ENCODE measurements at regions of chr10 and their contacts with region 1.

Region 1: DNA sequence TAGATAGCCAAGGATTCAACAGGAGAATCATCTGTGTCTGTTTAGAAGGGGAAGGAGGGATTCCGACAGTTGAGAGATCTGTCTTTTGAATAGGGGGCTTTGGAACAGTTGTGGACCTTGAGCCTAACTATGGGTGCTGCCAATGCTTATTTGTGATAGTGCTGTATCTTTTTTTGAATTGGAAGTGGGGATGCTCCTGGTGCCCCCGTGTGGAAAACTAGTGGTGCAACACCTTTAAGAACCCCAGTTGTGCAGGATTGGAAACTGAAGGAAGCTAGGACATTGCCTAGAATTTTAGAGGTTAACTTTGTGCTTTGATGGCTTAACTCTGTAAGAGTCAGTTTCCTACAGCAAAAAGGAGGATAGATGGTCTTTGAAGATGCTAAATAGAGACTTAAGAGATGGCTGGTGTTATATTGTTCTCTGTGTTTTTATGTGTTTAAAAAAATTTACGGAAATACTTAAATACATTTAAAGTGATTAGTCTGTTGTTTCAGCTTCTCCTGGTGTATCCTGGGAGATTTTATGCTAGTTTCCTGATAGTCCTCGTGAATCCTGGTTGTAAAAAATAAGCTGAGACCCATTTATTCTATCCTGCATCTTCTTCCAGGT is 69.3 kb downstream of the AP3M1 start:
- DNase-seq: peak; percentile 37
- CTCF ChIP-seq: peak; percentile 64

Region 2: DNA sequence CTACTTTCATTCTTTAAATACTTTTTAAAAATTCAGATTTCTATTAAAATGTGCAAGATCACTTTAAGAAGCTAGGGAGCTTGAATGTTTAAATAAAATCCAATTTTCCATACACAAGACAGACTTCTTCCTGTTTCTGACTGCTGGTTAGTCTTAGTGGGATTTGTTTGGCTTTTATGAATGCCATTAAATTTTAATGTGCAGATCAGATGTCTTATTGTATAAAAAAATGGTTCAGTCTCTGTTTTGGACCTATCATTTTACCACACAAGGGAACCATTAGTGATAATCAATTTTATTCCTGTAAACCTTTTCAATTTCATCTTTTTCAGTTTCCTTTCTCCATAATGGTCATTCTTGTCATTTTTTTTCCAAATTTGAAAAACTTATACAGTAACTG is 20.2 kb before region 1 on chr10:
- CTCF ChIA-PET with region 1: interaction called, 12 read pairs
- POLR2A ChIA-PET with region 1: no interaction called
- DNase-seq: no peak
- CTCF ChIP-seq: no peak

Region 3: GRCh38 chr10:74096777-74097176 is 15.5 kb after region 1 on chr10:
- CTCF ChIA-PET with region 1: interaction called, 61 read pairs
- POLR2A ChIA-PET with region 1: no interaction called
- DNase-seq: peak; percentile 75
- CTCF ChIP-seq: no peak

Region 4: GRCh38 chr10:74103560-74104248 is 22.4 kb after region 1 on chr10:
- CTCF ChIA-PET with region 1: interaction called, 23 read pairs
- POLR2A ChIA-PET with region 1: no interaction called
- DNase-seq: peak; percentile 63
- CTCF ChIP-seq: peak; percentile 59

Region 5: DNA sequence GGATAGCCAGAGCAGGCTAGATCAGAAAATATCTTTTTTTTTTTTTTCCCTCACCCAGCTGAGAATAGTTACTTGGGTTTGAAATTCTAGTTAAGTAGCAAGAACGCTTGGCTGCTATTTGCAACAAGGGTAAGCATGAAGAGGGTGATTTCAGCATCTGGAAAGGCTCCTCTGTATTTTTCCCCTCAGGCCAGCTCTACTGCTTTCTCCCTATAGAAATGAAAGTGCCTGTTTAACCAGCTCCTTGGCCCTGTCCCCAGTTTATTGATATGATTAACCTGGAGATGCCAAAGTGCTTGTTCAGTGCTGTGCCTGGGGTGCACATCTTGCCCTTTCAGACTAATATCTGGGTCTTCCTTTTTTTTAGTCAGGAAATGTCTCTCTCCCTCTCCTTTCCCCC is 32.2 kb after region 1 on chr10:
- CTCF ChIA-PET with region 1: interaction called, 23 read pairs
- POLR2A ChIA-PET with region 1: no interaction called
- DNase-seq: no peak
- CTCF ChIP-seq: no peak

Region 6: GRCh38 chr10:74156919-74157289 is 75.6 kb after region 1 on chr10:
- CTCF ChIA-PET with region 1: no interaction called
- POLR2A ChIA-PET with region 1: no interaction called
- DNase-seq: no peak
- CTCF ChIP-seq: no peak

Region 7: DNA sequence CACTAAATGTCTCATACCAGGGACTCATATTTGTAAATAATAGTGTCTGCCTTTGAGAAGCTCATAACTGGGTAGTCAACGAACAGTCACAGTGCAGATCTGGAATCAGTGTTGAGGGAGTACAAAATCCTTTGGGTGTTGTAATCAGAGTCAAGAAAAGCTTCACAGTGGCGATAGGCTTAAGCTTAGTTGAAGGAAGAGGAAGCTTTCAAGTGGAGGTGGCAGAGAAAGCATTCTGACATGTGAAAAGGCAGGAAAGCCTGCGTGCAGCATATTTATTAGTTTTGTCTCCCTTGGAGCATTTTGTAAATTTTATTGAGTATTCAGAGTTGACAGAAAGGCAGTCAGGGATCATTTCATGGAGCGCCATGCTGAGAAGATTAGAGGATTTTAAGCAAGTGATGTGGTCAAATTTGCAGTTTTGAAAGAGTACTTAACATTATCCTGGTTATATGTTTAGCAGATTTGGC is 174.6 kb after region 1 on chr10:
- CTCF ChIA-PET with region 1: no interaction called
- POLR2A ChIA-PET with region 1: no interaction called
- DNase-seq: no peak
- CTCF ChIP-seq: no peak

Measured in GM10248 (cell line).